Naive thymus-derived CD4-positive, alpha-beta T cell (primary cell): ENCODE measurements at regions of chr20 and their contacts with region 1.

Region 1: DNA sequence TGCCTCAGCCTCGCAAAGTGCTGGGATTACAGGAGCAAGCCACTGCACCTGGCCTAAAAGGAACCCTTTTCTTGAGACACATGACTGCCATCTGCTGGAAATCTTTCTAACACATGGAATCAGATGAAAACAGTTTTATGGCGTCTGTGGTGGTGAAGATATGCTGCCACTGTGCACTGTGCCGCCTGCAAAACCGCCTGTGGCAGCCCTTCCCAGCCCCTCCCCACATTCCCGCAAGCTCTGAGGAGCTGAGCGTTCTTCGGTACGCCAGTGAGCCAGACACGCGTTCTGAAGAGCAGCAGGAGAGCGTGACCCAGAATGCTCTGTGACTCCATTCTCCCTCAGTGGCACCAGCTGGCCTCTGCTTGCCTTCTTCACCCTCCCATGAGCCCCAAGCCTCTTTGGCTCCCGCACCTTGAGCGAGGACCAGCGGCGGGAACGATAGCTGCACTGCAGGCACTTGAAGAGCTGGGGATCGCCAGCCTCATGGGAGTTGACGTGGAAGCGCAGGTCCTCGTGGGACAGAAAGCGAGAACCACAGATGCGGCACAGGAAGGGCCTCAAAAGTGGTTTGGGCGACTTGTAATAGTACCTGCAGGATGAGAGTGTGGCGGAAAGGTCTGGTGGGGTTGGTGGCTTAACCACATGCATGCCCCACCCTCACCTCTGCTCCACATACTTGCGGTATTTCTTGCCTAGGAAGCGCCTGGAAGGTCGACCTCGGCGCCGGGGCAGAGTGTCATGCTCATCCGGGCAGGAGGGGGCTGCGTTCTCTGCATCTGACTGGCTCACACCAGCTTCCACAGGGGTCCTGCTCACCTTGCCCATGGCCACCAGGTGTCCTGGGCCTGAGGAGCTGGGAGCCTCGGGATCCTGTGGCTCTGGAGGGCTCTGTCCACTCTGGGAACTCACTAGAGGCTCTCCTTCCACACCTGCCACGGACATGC is 8.7 kb downstream of the ZNF335 start:
- DNase-seq: peak in 5 of 9 donors; percentile 23 to 42 (median 31)
- ATAC-seq: peak; percentile 50
- H3K4me3 ChIP-seq: no peak overlapping the region
- H3K4me3 Mint-ChIP-seq: no peak overlapping the region
- H3K27ac ChIP-seq: no peak overlapping the region
- H3K27ac Mint-ChIP-seq: peak overlapping the region in 4 of 9 donors; percentile 20 to 76 (median 50)
- H3K4me1 ChIP-seq: no peaks in the 10 kb centered on the region
- H3K4me1 Mint-ChIP-seq: peaks cover 0 to 3% (median 0%) of the 10 kb centered on the region in 7 donors
- H3K27me3 ChIP-seq: no peaks in the 10 kb centered on the region
- H3K27me3 Mint-ChIP-seq: no peaks in the 10 kb centered on the region

Region 2: DNA sequence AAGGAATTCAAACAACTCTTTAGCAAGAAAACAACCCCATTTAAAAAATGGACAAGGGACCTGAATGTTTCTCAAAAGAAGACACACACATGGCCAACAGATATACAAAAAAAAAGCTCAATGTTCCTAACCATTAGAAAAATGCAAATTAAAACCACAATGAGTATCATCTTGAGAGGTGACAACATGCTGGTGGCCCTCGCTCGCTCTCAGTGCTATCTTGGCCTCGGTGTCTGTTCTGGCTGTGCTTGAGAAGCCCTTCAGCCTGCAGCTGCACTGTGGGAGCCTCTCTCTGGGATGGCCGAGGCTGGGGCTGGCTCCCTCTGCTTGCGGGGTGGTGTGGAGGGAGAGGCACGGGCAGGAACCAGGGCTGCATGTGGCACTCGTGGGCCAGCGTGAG is 227.8 kb before region 1 on chr20:
- CTCF ChIA-PET with region 1: no interaction called
- POLR2A ChIA-PET with region 1: no interaction called
- intact Hi-C with region 1: no loop called
- DNase-seq: no peak
- ATAC-seq: no peak
- H3K4me3 ChIP-seq: no peak overlapping the region
- H3K4me3 Mint-ChIP-seq: no peak overlapping the region
- H3K27ac ChIP-seq: no peak overlapping the region
- H3K27ac Mint-ChIP-seq: no peak overlapping the region
- H3K4me1 ChIP-seq: no peaks in the 10 kb centered on the region
- H3K4me1 Mint-ChIP-seq: no peaks in the 10 kb centered on the region
- H3K27me3 ChIP-seq: no peaks in the 10 kb centered on the region
- H3K27me3 Mint-ChIP-seq: peaks cover 12 to 52% (median 30%) of the 10 kb centered on the region in 5 donors

Region 3: DNA sequence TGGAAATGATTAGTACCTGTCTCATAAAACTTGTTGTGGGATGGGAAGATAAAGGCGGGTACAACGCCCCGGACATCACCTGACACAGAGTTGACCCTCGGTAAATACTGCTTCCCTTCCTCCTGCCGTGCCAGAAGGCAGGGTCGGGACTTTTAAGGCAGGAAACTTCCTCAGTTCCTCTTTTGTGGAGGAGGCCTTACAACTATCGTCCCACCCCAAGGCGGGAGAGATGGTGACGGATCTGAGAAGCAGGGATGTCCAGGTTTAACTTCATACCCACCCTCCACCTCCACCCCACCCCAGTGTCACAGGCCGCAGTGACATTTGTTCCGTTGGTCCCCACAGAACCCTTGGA is 171.0 kb before region 1 on chr20:
- CTCF ChIA-PET with region 1: interaction called, 3 read pairs
- POLR2A ChIA-PET with region 1: no interaction called
- intact Hi-C with region 1: loop called in 1 of 2 experiments (anchors 2 kb)
- DNase-seq: peak in 1 of 9 donors; percentile 9
- ATAC-seq: peak; percentile 39
- H3K4me3 ChIP-seq: peak overlapping the region; percentile 70
- H3K4me3 Mint-ChIP-seq: peak overlapping the region; percentile 85 to 99 (median 92)
- H3K27ac ChIP-seq: peak overlapping the region; percentile 96
- H3K27ac Mint-ChIP-seq: peak overlapping the region; percentile 87 to 99 (median 93)
- H3K4me1 ChIP-seq: peaks cover 5 to 10% of the 10 kb centered on the region in 2 donors
- H3K4me1 Mint-ChIP-seq: peaks cover 13 to 28% (median 20%) of the 10 kb centered on the region in 7 donors
- H3K27me3 ChIP-seq: no peaks in the 10 kb centered on the region
- H3K27me3 Mint-ChIP-seq: peaks cover 0 to 5% (median 0%) of the 10 kb centered on the region in 5 donors

Region 4: GRCh38 chr20:45798935-45799642 is 164.2 kb before region 1 on chr20:
- CTCF ChIA-PET with region 1: interaction called, 8 read pairs
- POLR2A ChIA-PET with region 1: no interaction called
- intact Hi-C with region 1: loop called (anchors 1 kb)
- DNase-seq: peak; percentile 25 to 70 (median 58)
- ATAC-seq: peak; percentile 96
- H3K4me3 ChIP-seq: no peak overlapping the region
- H3K4me3 Mint-ChIP-seq: no peak overlapping the region
- H3K27ac ChIP-seq: peak overlapping the region; percentile 24
- H3K27ac Mint-ChIP-seq: peak overlapping the region in 8 of 9 donors; percentile 1 to 92 (median 52)
- H3K4me1 ChIP-seq: peaks cover 4 to 7% of the 10 kb centered on the region in 2 donors
- H3K4me1 Mint-ChIP-seq: peaks cover 9 to 21% (median 11%) of the 10 kb centered on the region in 7 donors
- H3K27me3 ChIP-seq: no peaks in the 10 kb centered on the region
- H3K27me3 Mint-ChIP-seq: no peaks in the 10 kb centered on the region

Region 5: GRCh38 chr20:45823949-45824835 is 139.1 kb before region 1 on chr20:
- CTCF ChIA-PET with region 1: no interaction called
- POLR2A ChIA-PET with region 1: no interaction called
- intact Hi-C with region 1: loop called in 1 of 2 experiments (anchors 1 kb)
- DNase-seq: peak; percentile 23 to 48 (median 30)
- ATAC-seq: peak; percentile 70
- H3K4me3 ChIP-seq: peak overlapping the region; percentile 29
- H3K4me3 Mint-ChIP-seq: peak overlapping the region; percentile 75 to 88 (median 84)
- H3K27ac ChIP-seq: no peak overlapping the region
- H3K27ac Mint-ChIP-seq: peak overlapping the region in 5 of 9 donors; percentile 21 to 73 (median 51)
- H3K4me1 ChIP-seq: peaks cover 0 to 7% of the 10 kb centered on the region in 2 donors
- H3K4me1 Mint-ChIP-seq: peaks cover 12 to 26% (median 19%) of the 10 kb centered on the region in 7 donors
- H3K27me3 ChIP-seq: peaks cover 3 to 10% of the 10 kb centered on the region in 2 donors
- H3K27me3 Mint-ChIP-seq: peaks cover 22 to 40% (median 33%) of the 10 kb centered on the region in 5 donors

Region 6: DNA sequence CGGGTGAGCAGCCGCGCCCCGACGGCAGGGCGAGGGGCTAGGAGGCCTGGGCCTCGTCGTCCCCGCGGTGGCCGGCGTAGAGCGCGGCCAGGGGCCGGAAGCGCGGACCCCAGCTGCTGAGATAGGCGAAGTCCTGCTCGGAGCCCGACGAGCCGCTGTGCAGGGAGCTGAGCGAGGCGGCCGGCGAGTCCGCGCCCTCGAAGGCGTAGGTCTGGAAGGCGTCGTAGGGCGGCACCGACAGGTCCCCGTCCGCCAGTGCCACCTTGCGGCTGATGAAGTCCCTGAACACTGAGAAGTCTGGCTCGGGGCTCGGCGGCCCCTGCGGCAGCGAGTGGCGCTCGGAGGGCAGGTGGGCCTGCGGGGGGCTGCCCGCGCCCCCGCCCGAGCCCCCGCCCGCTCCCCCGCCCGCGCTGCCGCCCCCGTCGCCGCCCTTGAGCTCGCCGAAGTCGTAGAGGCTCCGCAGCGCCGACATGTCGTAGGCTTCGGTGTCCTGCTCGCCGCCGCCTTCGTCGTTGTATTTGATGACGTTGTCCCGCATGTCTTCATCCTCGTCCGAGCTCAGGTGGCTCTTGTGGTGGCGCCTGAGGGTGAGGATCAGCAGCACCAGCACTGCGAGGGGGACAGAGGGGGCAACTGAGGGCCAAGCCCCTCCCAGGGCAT is 211.3 kb after region 1 on chr20:
- CTCF ChIA-PET with region 1: no interaction called
- POLR2A ChIA-PET with region 1: no interaction called
- intact Hi-C with region 1: no loop called
- DNase-seq: peak; percentile 37 to 71 (median 62)
- ATAC-seq: peak; percentile 91
- H3K4me3 ChIP-seq: no peak overlapping the region
- H3K4me3 Mint-ChIP-seq: peak overlapping the region in 4 of 10 donors; percentile 43 to 65 (median 48)
- H3K27ac ChIP-seq: no peak overlapping the region
- H3K27ac Mint-ChIP-seq: no peak overlapping the region
- H3K4me1 ChIP-seq: no peaks in the 10 kb centered on the region
- H3K4me1 Mint-ChIP-seq: peaks cover 0 to 5% (median 0%) of the 10 kb centered on the region in 7 donors
- H3K27me3 ChIP-seq: peaks cover 0 to 21% of the 10 kb centered on the region in 2 donors
- H3K27me3 Mint-ChIP-seq: peaks cover 50 to 71% (median 57%) of the 10 kb centered on the region in 5 donors